ENCODE measurements at regions of chr3 and their contacts with region 1.

Region 1: GRCh38 chr3:184811999-184812661 is at the start of gene VPS8:
- DNase-seq: peak; percentile 92 to 97 (median 96)
- ATAC-seq: peak; percentile 97
- H3K4me3 ChIP-seq: peak within 1 kb of the TSS; percentile 94
- H3K4me3 Mint-ChIP-seq: peak within 1 kb of the TSS; percentile 87 to 99 (median 96)
- H3K27ac ChIP-seq: peak within 1 kb of the TSS; percentile 88
- H3K27ac Mint-ChIP-seq: peak within 1 kb of the TSS; percentile 93 to 98 (median 97)
- H3K4me1 ChIP-seq: peaks cover 15 to 44% of the 10 kb centered on the region in 2 donors
- H3K4me1 Mint-ChIP-seq: peaks cover 27 to 59% (median 57%) of the 10 kb centered on the region in 7 donors
- H3K27me3 ChIP-seq: no peaks in the 10 kb centered on the region
- H3K27me3 Mint-ChIP-seq: peaks cover 0 to 4% (median 0%) of the 10 kb centered on the region in 5 donors
- total RNA-seq, gene VPS8: 77.9 to 119 (median 106) TPM

Region 2: GRCh38 chr3:184017672-184018423 is 794.3 kb before region 1 on chr3 and contains the start of gene ABCC5:
- CTCF ChIA-PET with region 1: no interaction called
- POLR2A ChIA-PET with region 1: no interaction called
- intact Hi-C with region 1: loop called in 1 of 2 experiments (anchors 2 kb)
- DNase-seq: peak; percentile 62 to 84 (median 79)
- ATAC-seq: peak; percentile 96
- H3K4me3 ChIP-seq: peak within 1 kb of the TSS; percentile 100
- H3K4me3 Mint-ChIP-seq: peak within 1 kb of the TSS; percentile 96 to 100 (median 99)
- H3K27ac ChIP-seq: peak within 1 kb of the TSS; percentile 72
- H3K27ac Mint-ChIP-seq: peak within 1 kb of the TSS; percentile 70 to 95 (median 91)
- H3K4me1 ChIP-seq: peaks cover 8 to 14% of the 10 kb centered on the region in 2 donors
- H3K4me1 Mint-ChIP-seq: peaks cover 11 to 33% (median 25%) of the 10 kb centered on the region in 7 donors
- H3K27me3 ChIP-seq: no peaks in the 10 kb centered on the region
- H3K27me3 Mint-ChIP-seq: peaks cover 5 to 15% (median 9%) of the 10 kb centered on the region in 5 donors
- total RNA-seq, gene ABCC5: 15.6 to 50.4 (median 25.5) TPM

Region 3: DNA sequence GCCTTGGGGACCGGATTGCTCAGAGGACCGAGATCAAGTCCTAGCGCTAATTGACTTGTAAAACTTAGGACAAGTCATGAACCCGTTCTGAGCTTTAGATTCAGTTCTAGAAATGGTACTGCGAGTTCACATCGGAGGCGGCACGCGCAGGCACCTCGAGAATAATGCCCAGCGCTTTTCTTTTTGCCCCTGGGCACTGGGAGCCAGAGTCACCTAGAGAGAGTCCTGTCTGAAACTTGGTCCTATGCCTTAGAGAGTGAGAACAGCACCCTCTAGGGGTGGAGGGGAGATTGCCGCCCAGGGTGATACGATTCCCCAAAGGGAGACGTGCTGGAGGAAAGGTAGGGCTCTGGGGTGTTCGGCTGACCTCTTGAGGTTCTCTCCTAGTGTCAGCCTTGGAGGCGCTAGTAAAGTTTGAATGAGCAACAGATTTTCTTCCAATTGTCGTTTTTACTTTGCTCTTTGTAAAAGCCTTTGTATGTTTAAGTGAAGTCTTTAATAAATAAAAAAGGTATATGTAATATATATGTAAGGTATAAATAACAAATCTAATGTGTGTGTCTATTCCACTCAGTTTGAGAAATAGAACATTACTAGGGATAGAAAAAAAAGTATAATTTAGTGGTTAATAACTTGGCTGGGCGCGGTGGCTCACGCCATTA is 561.8 kb before region 1 on chr3:
- CTCF ChIA-PET with region 1: no interaction called
- POLR2A ChIA-PET with region 1: interaction called, 5 read pairs
- intact Hi-C with region 1: loop called in 1 of 2 experiments (anchors 1 kb)
- DNase-seq: peak; percentile 70 to 87 (median 83)
- ATAC-seq: peak; percentile 77
- H3K4me3 ChIP-seq: peak overlapping the region; percentile 100
- H3K4me3 Mint-ChIP-seq: peak overlapping the region; percentile 86 to 100 (median 96)
- H3K27ac ChIP-seq: peak overlapping the region; percentile 78
- H3K27ac Mint-ChIP-seq: peak overlapping the region in 8 of 9 donors; percentile 69 to 98 (median 96)
- H3K4me1 ChIP-seq: peaks cover 5 to 12% of the 10 kb centered on the region in 2 donors
- H3K4me1 Mint-ChIP-seq: peaks cover 5 to 22% (median 16%) of the 10 kb centered on the region in 7 donors
- H3K27me3 ChIP-seq: no peaks in the 10 kb centered on the region
- H3K27me3 Mint-ChIP-seq: no peaks in the 10 kb centered on the region

Region 4: DNA sequence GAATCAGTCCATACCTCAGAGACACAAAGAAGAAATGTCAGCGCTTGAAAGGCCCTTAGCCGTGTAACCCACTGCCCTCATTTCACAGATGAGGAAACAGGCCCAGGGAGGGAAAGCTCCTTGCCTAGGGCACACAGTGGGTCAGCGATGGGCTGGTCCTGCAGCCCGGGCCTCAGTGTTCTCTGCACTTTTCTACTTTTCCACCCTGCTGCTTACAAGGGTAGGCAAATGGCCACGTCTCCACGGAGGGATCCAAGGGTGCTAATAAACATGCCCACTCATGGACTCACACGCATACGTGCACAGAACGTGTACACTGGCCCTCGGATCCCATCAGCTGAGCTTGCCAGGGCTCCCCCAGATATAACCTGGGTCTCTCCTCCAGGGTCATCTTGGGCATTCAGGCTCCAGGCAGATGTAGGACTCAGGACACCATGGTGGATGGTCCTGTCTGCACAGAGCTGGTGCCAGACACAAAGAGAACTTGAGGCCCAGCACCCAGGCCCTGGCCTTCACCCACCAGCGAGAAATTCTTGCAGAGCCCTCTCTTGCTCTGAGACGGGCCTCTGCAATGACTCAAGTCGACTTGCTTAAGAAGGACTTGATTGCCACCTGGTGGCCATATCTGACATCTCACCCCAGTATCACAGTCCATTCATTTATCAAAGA is 34.7 kb before region 1 on chr3:
- CTCF ChIA-PET with region 1: no interaction called
- POLR2A ChIA-PET with region 1: interaction called, 3 read pairs
- intact Hi-C with region 1: loop called in 1 of 2 experiments (anchors 2 kb)
- DNase-seq: peak; percentile 35 to 84 (median 78)
- ATAC-seq: peak; percentile 96
- H3K4me3 ChIP-seq: no peak overlapping the region
- H3K4me3 Mint-ChIP-seq: no peak overlapping the region
- H3K27ac ChIP-seq: no peak overlapping the region
- H3K27ac Mint-ChIP-seq: no peak overlapping the region
- H3K4me1 ChIP-seq: no peaks in the 10 kb centered on the region
- H3K4me1 Mint-ChIP-seq: peaks cover 0 to 3% (median 0%) of the 10 kb centered on the region in 7 donors
- H3K27me3 ChIP-seq: peaks cover 0 to 4% of the 10 kb centered on the region in 2 donors
- H3K27me3 Mint-ChIP-seq: peaks cover 6 to 28% (median 19%) of the 10 kb centered on the region in 5 donors

Region 5: GRCh38 chr3:185498503-185499396 is 686.6 kb after region 1 on chr3 and contains the start of gene TMEM41A:
- CTCF ChIA-PET with region 1: no interaction called
- POLR2A ChIA-PET with region 1: no interaction called
- intact Hi-C with region 1: loop called in 1 of 2 experiments (anchors 2 kb)
- DNase-seq: peak; percentile 80 to 94 (median 88)
- ATAC-seq: peak; percentile 99
- H3K4me3 ChIP-seq: peak within 1 kb of the TSS; percentile 93
- H3K4me3 Mint-ChIP-seq: peak within 1 kb of the TSS; percentile 87 to 98 (median 96)
- H3K27ac ChIP-seq: peak within 1 kb of the TSS; percentile 76
- H3K27ac Mint-ChIP-seq: peak within 1 kb of the TSS; percentile 87 to 95 (median 90)
- H3K4me1 ChIP-seq: peaks cover 17 to 24% of the 10 kb centered on the region in 2 donors
- H3K4me1 Mint-ChIP-seq: peaks cover 6 to 40% (median 29%) of the 10 kb centered on the region in 7 donors
- H3K27me3 ChIP-seq: no peaks in the 10 kb centered on the region
- H3K27me3 Mint-ChIP-seq: peaks cover 0 to 10% (median 0%) of the 10 kb centered on the region in 5 donors
- total RNA-seq, gene TMEM41A: 23.7 to 30.5 (median 29.1) TPM

Region 6: GRCh38 chr3:186783073-186783730 is 1971.1 kb after region 1 on chr3 and contains the start of gene EIF4A2:
- CTCF ChIA-PET with region 1: no interaction called
- POLR2A ChIA-PET with region 1: no interaction called
- intact Hi-C with region 1: loop called in 1 of 2 experiments (anchors 10 kb)
- DNase-seq: peak; percentile 87 to 93 (median 91)
- ATAC-seq: peak; percentile 86
- H3K4me3 ChIP-seq: peak within 1 kb of the TSS; percentile 88
- H3K4me3 Mint-ChIP-seq: peak within 1 kb of the TSS; percentile 95 to 100 (median 99)
- H3K27ac ChIP-seq: peak within 1 kb of the TSS; percentile 97
- H3K27ac Mint-ChIP-seq: peak within 1 kb of the TSS; percentile 96 to 100 (median 99)
- H3K4me1 ChIP-seq: peaks cover 37 to 39% of the 10 kb centered on the region in 2 donors
- H3K4me1 Mint-ChIP-seq: peaks cover 22 to 59% (median 51%) of the 10 kb centered on the region in 7 donors
- H3K27me3 ChIP-seq: no peaks in the 10 kb centered on the region
- H3K27me3 Mint-ChIP-seq: peaks cover 0 to 3% (median 0%) of the 10 kb centered on the region in 5 donors
- total RNA-seq, gene EIF4A2: 401 to 804 (median 650) TPM

Measured in naive thymus-derived CD4-positive, alpha-beta T cell (primary cell).